ENCODE measurements at regions of chr19 and their contacts with region 1.

Region 1: DNA sequence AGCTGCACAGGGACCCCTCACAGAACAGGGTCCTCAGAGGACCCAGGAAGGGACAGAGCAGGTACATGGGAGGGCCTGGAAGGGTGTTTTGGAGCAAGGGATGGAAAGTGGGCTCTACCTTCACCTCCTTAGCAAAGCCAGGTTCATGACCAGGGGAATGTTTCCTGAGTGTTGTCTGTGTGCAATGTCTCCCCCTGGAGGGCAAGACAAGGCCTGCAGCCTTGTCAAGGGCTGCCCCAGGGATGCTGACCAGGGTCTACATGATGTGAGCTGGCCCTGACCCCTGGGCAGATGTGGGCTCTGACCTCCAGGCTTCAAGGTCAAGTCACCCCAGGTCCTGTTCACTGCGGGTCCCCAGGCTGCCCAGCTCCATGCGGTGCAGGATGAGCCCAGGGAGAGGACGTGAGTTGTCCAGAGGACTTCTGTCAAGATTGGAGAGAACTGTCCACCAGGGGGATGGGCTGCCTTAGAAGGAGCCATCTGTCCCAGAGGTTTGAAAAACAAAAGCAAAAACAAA is 1.0 kb upstream of the CEACAM1 start:
- DNase-seq: peak; percentile 77
- H3K4me3 Mint-ChIP-seq: peak overlapping the region; percentile 82
- H3K27ac Mint-ChIP-seq: peak overlapping the region; percentile 81
- H3K4me1 Mint-ChIP-seq: peaks cover 48% of the 10 kb centered on the region
- H3K27me3 Mint-ChIP-seq: peaks cover 7% of the 10 kb centered on the region

Region 2: GRCh38 chr19:42423462-42424344 is 105.6 kb before region 1 on chr19:
- CTCF ChIA-PET with region 1: interaction called, 11 read pairs
- DNase-seq: peak; percentile 96
- H3K4me3 Mint-ChIP-seq: peak overlapping the region; percentile 89
- H3K27ac Mint-ChIP-seq: peak overlapping the region; percentile 88
- H3K4me1 Mint-ChIP-seq: peaks cover 45% of the 10 kb centered on the region
- H3K27me3 Mint-ChIP-seq: peaks cover 38% of the 10 kb centered on the region

Region 3: DNA sequence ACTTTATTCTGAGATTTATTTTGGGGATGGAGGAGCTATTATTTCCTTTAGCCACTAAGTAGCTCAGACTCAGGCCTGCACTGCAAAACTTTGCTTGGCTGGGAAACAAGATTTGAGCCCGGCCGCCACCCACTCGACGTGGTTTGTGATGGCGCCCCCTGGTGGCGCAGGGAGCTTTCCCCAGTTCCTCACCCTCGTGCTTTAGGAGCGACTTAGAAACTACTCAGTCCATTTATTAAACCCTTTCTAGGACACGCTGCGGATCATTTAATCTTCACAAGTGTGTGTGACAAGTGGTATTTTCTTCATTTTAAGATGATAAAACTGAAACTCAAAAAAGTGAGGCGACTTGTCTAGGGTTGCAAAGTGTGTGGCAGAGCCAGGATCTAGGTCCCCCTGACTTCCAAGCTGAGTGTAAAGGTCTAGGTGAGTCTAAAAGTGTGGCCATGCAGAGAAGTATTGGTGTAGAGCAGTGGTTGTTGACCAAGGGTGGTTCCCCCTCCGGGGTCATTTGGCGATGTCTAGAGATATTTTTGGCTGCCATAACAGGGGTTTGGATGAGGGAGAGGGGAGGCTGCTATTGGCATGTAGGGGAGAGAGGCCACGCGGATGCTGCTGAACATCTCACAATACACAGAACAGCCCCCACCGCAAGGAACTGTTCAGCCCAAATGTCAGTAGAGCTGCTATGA is 88.8 kb before region 1 on chr19:
- CTCF ChIA-PET with region 1: interaction called, 46 read pairs
- DNase-seq: peak; percentile 85
- H3K4me3 Mint-ChIP-seq: no peak overlapping the region
- H3K27ac Mint-ChIP-seq: no peak overlapping the region
- H3K4me1 Mint-ChIP-seq: peaks cover 23% of the 10 kb centered on the region
- H3K27me3 Mint-ChIP-seq: peaks cover 47% of the 10 kb centered on the region

Region 4: GRCh38 chr19:42450314-42450934 is 78.9 kb before region 1 on chr19:
- CTCF ChIA-PET with region 1: interaction called, 140 read pairs
- DNase-seq: peak; percentile 86
- H3K4me3 Mint-ChIP-seq: no peak overlapping the region
- H3K27ac Mint-ChIP-seq: no peak overlapping the region
- H3K4me1 Mint-ChIP-seq: peaks cover 33% of the 10 kb centered on the region
- H3K27me3 Mint-ChIP-seq: peaks cover 16% of the 10 kb centered on the region

Region 5: GRCh38 chr19:42455621-42456081 is 73.7 kb before region 1 on chr19:
- CTCF ChIA-PET with region 1: interaction called, 140 read pairs
- DNase-seq: no peak
- H3K4me3 Mint-ChIP-seq: no peak overlapping the region
- H3K27ac Mint-ChIP-seq: no peak overlapping the region
- H3K4me1 Mint-ChIP-seq: peaks cover 42% of the 10 kb centered on the region
- H3K27me3 Mint-ChIP-seq: peaks cover 23% of the 10 kb centered on the region

Region 6: DNA sequence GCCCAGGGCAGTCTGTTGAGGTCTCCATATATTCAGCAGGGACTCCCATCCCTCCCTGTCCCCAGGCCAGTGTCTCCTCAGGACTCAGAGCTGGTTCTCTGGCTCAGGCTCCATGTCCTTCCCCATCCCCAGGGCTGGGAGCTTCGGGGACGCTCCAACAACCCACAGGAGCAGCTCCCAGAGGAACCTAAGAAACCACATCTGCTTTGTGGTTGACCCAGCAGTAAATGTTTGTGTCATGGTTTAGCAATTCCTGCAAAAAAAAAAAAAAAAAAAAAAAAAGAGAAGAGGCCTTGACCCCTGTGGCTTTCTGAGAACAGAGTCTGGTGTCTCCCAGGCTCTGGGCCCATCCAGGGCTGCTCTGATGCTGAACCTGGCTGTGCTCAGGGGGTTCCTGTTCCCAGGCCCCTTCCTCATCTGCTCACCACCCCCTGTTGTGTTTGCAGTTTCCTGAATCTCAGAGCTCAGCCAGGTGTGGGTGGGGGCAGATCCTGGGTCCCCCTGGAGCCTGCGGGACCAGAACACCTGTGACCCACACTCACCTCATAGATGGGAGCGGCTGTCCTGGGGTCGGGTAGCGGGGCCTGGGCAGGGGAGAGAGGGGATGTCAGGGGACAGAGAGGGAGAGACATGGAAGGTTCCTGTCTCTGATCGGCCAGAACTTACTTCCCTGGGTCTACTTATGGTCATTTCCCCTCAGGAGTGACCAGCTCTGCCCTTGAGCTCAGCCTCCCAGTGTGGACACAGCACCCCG is 24.2 kb after region 1 on chr19:
- CTCF ChIA-PET with region 1: no interaction called
- DNase-seq: no peak
- H3K4me3 Mint-ChIP-seq: no peak overlapping the region
- H3K27ac Mint-ChIP-seq: no peak overlapping the region
- H3K4me1 Mint-ChIP-seq: no peaks in the 10 kb centered on the region
- H3K27me3 Mint-ChIP-seq: peaks cover 71% of the 10 kb centered on the region